SK-N-SH (cell line): ENCODE measurements at regions of chr17 and their contacts with region 1.

Region 1: GRCh38 chr17:79393358-79394202 is 217.3 kb downstream of the RBFOX3 start:
- DNase-seq: peak; percentile 97
- H3K4me3 ChIP-seq: no peak overlapping the region; a peak in 1 of 4 replicates
- H3K27ac ChIP-seq: no peak overlapping the region
- H3K4me1 ChIP-seq: no peaks in the 10 kb centered on the region; a peak in 1 of 4 replicates
- H3K27me3 ChIP-seq: peaks cover 64% of the 10 kb centered on the region
- CTCF ChIP-seq: peak; percentile 97
- EP300 ChIP-seq: no peak
- RAD21 ChIP-seq: peak; percentile 97

Region 2: GRCh38 chr17:79074650-79075445 is 318.7 kb before region 1 on chr17 and contains the start of gene ENGASE:
- CTCF ChIA-PET with region 1: interaction called, 1,305 read pairs
- POLR2A ChIA-PET with region 1: no interaction called
- DNase-seq: peak; percentile 100
- H3K4me3 ChIP-seq: peak within 1 kb of the TSS; percentile 65 to 85
- H3K27ac ChIP-seq: peak within 1 kb of the TSS in 1 of 2 experiments; percentile 29; a peak in 1 of 4 replicates
- H3K4me1 ChIP-seq: peaks cover 0 to 7% of the 10 kb centered on the region in 2 experiments; a peak in 1 of 4 replicates
- H3K27me3 ChIP-seq: no peaks in the 10 kb centered on the region; the same call in 1 of the 2 replicates
- CTCF ChIP-seq: no peak
- EP300 ChIP-seq: no peak
- RAD21 ChIP-seq: no peak
- polyA plus RNA-seq, gene ENGASE: 30.1 and 30.4 TPM in 2 replicates

Region 3: GRCh38 chr17:79255926-79256585 is 137.5 kb before region 1 on chr17:
- CTCF ChIA-PET with region 1: interaction called, 43 read pairs
- POLR2A ChIA-PET with region 1: no interaction called
- DNase-seq: no peak
- H3K4me3 ChIP-seq: no peak overlapping the region
- H3K27ac ChIP-seq: no peak overlapping the region
- H3K4me1 ChIP-seq: peaks cover 0 to 52% of the 10 kb centered on the region in 2 experiments; a peak in 2 of 4 replicates
- H3K27me3 ChIP-seq: peaks cover 35% of the 10 kb centered on the region
- CTCF ChIP-seq: no peak
- EP300 ChIP-seq: no peak
- RAD21 ChIP-seq: no peak

Region 4: DNA sequence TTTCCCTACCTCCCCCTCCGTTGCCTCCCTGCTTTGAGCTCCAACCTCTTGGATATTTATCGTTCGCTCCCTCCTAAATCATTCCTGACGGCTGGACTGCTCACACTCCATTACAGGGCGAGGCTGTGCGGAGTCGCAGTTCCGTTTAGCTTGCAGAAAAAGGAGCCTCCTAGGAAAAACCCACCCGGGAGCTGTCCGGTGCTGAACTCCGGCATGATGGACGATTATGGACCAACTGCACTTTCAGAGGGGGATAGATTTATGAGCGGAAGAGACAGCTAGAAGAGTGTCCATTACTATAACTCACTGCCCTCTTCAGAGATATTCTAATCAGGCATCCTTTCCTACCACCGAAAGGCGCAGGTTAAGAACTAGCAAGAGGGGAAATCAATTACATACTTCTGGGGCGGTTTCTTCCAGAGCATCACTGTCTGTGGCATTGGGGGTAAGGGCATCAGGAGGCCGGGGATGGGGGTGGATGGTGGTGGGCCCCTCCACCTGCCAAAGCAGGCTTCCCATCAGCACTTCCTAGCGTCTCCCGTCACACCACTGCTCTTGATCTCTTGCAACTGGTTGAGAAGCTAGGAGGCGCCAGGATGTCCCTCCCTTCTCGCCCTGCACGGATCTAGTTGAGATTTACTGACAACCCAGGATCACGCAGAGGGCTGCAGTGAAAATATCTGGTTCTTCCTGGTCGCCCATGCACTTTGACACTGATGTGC is 67.7 kb before region 1 on chr17:
- CTCF ChIA-PET with region 1: interaction called, 26 read pairs
- POLR2A ChIA-PET with region 1: no interaction called
- DNase-seq: no peak
- H3K4me3 ChIP-seq: no peak overlapping the region
- H3K27ac ChIP-seq: no peak overlapping the region
- H3K4me1 ChIP-seq: no peaks in the 10 kb centered on the region; a peak in 1 of 4 replicates
- H3K27me3 ChIP-seq: no peaks in the 10 kb centered on the region
- CTCF ChIP-seq: no peak
- EP300 ChIP-seq: no peak
- RAD21 ChIP-seq: no peak

Region 5: GRCh38 chr17:79382322-79382721 is 11.3 kb before region 1 on chr17:
- CTCF ChIA-PET with region 1: interaction called, 333 read pairs
- POLR2A ChIA-PET with region 1: interaction called, 3 read pairs
- DNase-seq: no peak
- H3K4me3 ChIP-seq: no peak overlapping the region
- H3K27ac ChIP-seq: no peak overlapping the region
- H3K4me1 ChIP-seq: no peaks in the 10 kb centered on the region
- H3K27me3 ChIP-seq: peaks cover 15% of the 10 kb centered on the region; the same call in 1 of the 2 replicates
- CTCF ChIP-seq: no peak
- EP300 ChIP-seq: no peak
- RAD21 ChIP-seq: no peak

Region 6: DNA sequence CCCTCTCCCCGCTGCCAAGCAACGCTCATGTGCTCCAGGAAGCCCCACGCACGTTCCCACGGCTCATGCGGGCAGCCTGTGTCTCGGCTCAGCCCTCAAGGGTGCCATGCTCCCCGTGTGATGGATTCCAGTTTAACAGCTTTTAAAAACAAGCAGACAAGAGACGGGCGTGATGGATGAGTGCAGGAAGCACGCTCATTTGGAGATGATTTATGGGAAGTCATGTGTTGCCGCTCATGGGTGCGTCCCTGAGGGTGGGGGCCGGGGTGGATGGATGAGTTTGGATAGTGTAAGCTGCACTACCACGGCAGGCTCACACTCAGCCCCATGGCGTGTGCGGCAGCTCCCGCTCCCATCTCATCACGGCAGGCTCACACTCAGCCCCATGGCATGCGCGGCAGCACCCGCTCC is 84.5 kb after region 1 on chr17:
- CTCF ChIA-PET with region 1: no interaction called
- POLR2A ChIA-PET with region 1: no interaction called
- DNase-seq: no peak
- H3K4me3 ChIP-seq: no peak overlapping the region
- H3K27ac ChIP-seq: no peak overlapping the region
- H3K4me1 ChIP-seq: peaks cover 0 to 4% of the 10 kb centered on the region in 2 experiments; a peak in 1 of 4 replicates
- H3K27me3 ChIP-seq: no peaks in the 10 kb centered on the region
- CTCF ChIP-seq: no peak
- EP300 ChIP-seq: no peak
- RAD21 ChIP-seq: no peak

Region 7: DNA sequence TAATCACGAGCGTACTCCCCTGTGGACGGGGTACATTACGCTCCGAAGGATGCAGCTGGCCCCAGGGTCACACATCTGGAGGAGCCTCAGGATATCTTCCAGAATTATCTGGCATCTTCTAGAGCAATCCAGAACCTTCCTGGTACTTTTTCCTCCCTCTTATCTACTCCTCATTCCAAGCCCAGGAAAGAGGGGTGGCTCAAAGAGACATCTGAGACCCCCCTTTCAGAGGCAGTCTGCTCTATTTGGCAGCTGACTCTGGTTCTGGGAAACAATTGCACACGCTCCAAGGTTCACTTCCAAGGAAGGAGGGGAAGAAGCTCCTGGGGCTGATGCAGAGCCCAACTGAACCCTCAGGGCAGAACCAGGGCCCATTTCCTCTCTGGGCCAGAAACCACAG is 202.3 kb after region 1 on chr17:
- CTCF ChIA-PET with region 1: no interaction called
- POLR2A ChIA-PET with region 1: no interaction called
- DNase-seq: no peak
- H3K4me3 ChIP-seq: no peak overlapping the region
- H3K27ac ChIP-seq: no peak overlapping the region
- H3K4me1 ChIP-seq: peaks cover 0 to 6% of the 10 kb centered on the region in 2 experiments; a peak in 1 of 4 replicates
- H3K27me3 ChIP-seq: peaks cover 41% of the 10 kb centered on the region
- CTCF ChIP-seq: no peak
- EP300 ChIP-seq: no peak
- RAD21 ChIP-seq: no peak

Region 8: GRCh38 chr17:79695797-79696609 is 302.4 kb after region 1 on chr17:
- CTCF ChIA-PET with region 1: interaction called, 13 read pairs
- POLR2A ChIA-PET with region 1: no interaction called
- DNase-seq: peak; percentile 75
- H3K4me3 ChIP-seq: no peak overlapping the region
- H3K27ac ChIP-seq: no peak overlapping the region
- H3K4me1 ChIP-seq: peaks cover 0 to 11% of the 10 kb centered on the region in 2 experiments; a peak in 2 of 4 replicates
- H3K27me3 ChIP-seq: 0 out of 2 replicates have a peak, but pooled peaks cover 6% of the 10 kb centered on the region
- CTCF ChIP-seq: no peak
- EP300 ChIP-seq: no peak
- RAD21 ChIP-seq: no peak

Region 9: DNA sequence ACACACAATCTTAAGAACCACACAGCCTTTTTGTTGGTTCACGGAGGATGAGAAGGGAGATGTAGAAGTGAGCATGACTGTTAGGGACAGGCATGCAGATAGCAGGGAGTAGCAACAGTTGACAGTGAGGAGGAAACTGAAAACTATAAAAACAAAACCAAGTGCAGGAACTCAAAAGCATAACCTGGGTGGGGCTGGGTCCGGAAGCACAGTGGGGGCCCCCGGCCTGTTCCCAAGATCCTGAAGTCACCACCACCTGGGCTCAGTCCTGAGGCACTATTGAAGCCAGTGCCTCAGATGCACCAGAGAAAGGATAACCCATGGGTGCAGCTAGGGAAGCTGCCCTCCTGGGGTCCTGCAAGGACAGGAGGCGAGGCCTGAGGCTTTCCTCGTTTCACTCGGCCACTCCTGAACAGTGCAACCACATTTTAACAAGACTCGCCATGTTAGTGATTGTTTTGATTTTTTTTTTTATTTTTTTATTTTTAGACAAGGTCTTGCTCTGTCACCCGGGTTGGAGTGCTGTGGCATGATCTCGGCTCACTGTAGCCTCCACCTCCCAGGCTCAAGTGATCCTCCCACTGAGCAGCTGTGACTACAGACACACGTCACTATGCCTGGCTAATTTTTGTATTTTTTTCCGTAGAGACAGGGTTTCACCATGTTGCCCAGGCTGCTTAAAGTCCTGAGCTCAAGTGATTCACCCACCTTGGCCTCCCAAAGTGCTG is 473.4 kb after region 1 on chr17:
- CTCF ChIA-PET with region 1: no interaction called
- POLR2A ChIA-PET with region 1: no interaction called
- DNase-seq: peak; percentile 19
- H3K4me3 ChIP-seq: no peak overlapping the region
- H3K27ac ChIP-seq: no peak overlapping the region
- H3K4me1 ChIP-seq: no peaks in the 10 kb centered on the region
- H3K27me3 ChIP-seq: peaks cover 12% of the 10 kb centered on the region; the same call in 1 of the 2 replicates
- CTCF ChIP-seq: no peak
- EP300 ChIP-seq: no peak
- RAD21 ChIP-seq: no peak